ENCODE measurements at regions of chr9 and their contacts with region 1.

Region 1: GRCh38 chr9:121321016-121321503 is 49.0 kb downstream of the STOM start:
- DNase-seq: no peak
- H3K4me3 ChIP-seq: no peak overlapping the region
- H3K27ac ChIP-seq: peak overlapping the region; percentile 9
- H3K4me1 ChIP-seq: peaks cover 22% of the 10 kb centered on the region
- H3K27me3 ChIP-seq: no peaks in the 10 kb centered on the region
- CTCF ChIP-seq: no peak
- POLR2A ChIP-seq: no peak

Region 2: DNA sequence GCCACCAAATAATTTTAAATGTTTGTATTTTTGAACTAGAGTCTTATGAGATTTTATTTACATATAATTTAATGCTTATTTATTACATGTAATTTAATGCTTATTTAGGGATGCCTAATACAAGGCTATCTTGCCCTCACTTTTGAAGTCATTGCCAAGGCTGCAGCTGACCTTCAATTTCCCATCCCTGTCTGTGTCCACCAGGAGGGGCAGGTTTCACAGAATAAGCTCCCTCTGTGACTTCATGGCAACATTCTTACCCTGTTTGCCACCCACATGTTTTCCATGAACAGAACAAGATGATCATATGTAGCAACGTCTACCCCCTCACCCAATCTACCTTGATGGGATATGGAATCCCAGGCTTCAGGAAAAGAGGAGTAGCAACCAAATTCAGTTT is 298.0 kb before region 1 on chr9:
- CTCF ChIA-PET with region 1: no interaction called
- POLR2A ChIA-PET with region 1: no interaction called
- dilution Hi-C with region 1: no loop called
- intact Hi-C with region 1: no loop called
- DNase-seq: no peak
- H3K4me3 ChIP-seq: no peak overlapping the region
- H3K27ac ChIP-seq: no peak overlapping the region
- H3K4me1 ChIP-seq: no peaks in the 10 kb centered on the region
- H3K27me3 ChIP-seq: no peaks in the 10 kb centered on the region
- CTCF ChIP-seq: no peak
- POLR2A ChIP-seq: no peak

Region 3: DNA sequence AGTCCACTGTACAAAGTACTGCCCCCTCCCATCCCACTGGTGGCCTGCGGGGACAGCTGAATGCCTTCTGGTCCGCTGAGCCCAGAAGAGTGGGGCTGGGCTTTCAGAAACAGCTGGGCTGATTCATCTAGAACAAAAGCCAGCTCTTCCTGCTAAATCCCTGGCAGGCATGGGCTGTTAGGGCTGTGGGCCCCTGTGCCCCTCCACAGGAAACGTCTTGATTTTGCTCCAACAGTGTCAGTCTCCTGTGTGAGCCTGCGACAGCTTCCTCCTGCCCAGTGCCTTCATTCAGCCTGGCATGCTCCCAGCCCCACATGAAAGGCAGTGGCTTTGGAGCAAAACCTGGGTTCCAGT is 60.0 kb before region 1 on chr9:
- CTCF ChIA-PET with region 1: interaction called, 10 read pairs
- POLR2A ChIA-PET with region 1: no interaction called
- dilution Hi-C with region 1: no loop called
- intact Hi-C with region 1: no loop called
- DNase-seq: peak; percentile 63
- H3K4me3 ChIP-seq: no peak overlapping the region
- H3K27ac ChIP-seq: peak overlapping the region; percentile 13
- H3K4me1 ChIP-seq: peaks cover 17% of the 10 kb centered on the region
- H3K27me3 ChIP-seq: peaks cover 0 to 5% of the 10 kb centered on the region in 2 experiments
- CTCF ChIP-seq: no peak
- POLR2A ChIP-seq: no peak

Region 4: DNA sequence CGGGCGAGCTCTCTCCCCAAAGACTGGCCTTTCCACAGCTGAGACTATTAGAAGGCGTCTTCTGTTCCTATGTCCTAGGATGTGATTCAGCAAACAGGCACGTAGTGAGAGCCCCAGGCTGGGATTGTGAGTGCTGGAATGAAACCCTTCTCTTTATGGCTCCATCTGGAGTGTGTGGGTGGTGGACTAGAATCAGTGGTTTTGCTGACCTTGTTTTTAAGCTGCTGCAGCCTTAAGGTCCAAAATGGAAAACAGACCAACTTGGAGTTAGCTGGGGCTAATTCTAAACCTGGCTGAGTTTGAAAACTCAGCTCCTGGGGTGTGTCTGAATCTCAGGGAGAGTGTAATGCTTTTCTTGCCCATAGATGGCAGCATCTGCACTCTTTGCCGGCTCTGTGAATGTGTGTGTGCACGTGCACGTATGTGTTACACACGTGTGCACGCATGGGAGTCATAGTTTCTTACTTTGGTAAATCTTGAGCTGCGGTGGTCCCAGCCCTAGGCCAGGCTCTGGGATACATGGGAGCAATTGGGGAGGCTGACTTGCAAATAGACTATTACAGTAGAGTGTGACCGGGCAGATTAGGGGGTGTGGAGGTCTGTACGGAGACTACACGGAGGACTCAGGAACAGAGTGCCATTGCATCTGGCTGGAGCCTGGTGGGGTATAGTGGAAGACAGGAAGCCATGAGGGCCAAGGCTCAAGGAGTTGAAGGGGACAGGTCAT is 42.4 kb before region 1 on chr9:
- CTCF ChIA-PET with region 1: interaction called, 43 read pairs
- POLR2A ChIA-PET with region 1: no interaction called
- dilution Hi-C with region 1: no loop called
- intact Hi-C with region 1: loop called (anchors 1 kb)
- DNase-seq: peak; percentile 84
- H3K4me3 ChIP-seq: peak overlapping the region in 1 of 3 experiments; percentile 8
- H3K27ac ChIP-seq: peak overlapping the region; percentile 73
- H3K4me1 ChIP-seq: peaks cover 44% of the 10 kb centered on the region
- H3K27me3 ChIP-seq: no peaks in the 10 kb centered on the region
- CTCF ChIP-seq: peak; percentile 80 to 84
- POLR2A ChIP-seq: no peak

Region 5: DNA sequence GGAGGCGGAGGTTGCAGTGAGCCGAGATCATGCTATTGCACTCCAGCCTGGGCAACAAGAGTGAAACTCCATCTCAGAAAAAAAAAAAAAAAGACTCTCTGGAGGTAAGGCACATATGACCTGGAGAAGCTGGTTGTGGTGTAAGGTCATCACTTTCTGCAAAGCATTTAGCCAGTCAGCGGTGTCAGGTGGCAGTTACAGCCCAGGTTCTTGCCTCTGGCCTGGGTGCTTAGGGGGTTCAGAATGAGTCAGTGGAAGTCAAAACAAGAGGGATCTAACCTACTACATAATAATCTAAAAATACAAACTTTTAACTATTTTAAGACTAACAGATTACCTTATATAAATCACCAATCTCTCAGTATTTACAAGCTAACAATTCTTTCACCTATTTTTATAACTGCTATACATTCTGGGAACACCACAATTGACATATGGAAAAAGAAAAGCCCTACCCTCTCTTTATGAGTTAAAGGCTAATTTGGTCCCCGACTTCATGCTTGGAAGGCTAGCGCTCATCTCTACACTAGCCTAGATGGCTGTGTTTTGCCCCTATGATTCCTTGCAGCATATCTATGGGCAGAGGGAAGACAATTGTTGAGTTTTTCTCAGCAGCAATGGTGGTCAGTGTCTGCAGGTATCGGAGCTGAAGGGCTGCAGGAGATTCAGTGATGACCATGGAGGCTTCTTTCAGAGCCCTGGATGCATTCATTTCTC is 19.8 kb after region 1 on chr9:
- CTCF ChIA-PET with region 1: interaction called, 12 read pairs
- POLR2A ChIA-PET with region 1: no interaction called
- dilution Hi-C with region 1: no loop called
- intact Hi-C with region 1: no loop called
- DNase-seq: no peak
- H3K4me3 ChIP-seq: no peak overlapping the region
- H3K27ac ChIP-seq: no peak overlapping the region
- H3K4me1 ChIP-seq: no peaks in the 10 kb centered on the region
- H3K27me3 ChIP-seq: no peaks in the 10 kb centered on the region
- CTCF ChIP-seq: no peak
- POLR2A ChIP-seq: no peak

Region 6: DNA sequence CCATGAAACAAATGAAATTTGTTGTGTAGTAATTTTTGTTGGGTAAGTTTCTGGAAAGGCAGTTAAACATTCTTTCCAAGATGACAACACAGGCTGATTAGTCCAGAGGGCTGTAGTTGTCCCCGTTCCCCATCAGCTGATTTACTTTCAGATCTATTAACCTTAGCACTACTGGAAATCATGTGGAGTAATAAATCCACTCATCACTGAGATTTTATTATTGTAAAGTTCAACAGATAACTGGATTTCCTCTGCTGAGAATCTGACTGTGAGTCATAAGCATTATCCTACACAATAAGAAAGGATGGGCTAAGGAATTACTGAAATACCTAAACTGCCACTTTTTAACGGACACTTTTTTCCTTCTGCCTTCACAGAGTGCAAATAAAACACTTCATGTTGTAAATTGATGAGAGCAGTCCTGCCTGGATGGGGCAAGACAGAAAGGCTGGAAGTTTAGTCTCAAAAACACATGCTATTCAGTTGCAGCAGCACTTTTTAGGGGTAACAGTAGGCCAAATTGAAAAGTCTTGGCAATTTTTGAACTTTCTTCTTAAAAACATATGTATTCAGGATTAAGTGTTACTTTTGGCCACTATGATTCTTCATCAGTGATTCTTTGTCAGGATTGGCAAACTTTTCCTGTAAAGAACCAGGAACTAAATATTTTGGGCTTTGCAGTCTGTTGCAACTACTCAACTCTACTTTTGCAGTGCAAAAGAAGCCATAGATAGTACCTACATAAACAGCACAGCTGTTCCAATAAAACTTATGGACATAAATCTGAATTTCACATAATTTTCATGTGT is 42.0 kb after region 1 on chr9:
- CTCF ChIA-PET with region 1: interaction called, 13 read pairs
- POLR2A ChIA-PET with region 1: no interaction called
- dilution Hi-C with region 1: no loop called
- intact Hi-C with region 1: no loop called
- DNase-seq: peak; percentile 75
- H3K4me3 ChIP-seq: no peak overlapping the region
- H3K27ac ChIP-seq: peak overlapping the region; percentile 66
- H3K4me1 ChIP-seq: peaks cover 96% of the 10 kb centered on the region
- H3K27me3 ChIP-seq: no peaks in the 10 kb centered on the region
- CTCF ChIP-seq: no peak
- POLR2A ChIP-seq: no peak

Region 7: GRCh38 chr9:121383715-121384114 is 62.7 kb after region 1 on chr9:
- CTCF ChIA-PET with region 1: interaction called, 116 read pairs
- POLR2A ChIA-PET with region 1: no interaction called
- dilution Hi-C with region 1: no loop called
- intact Hi-C with region 1: no loop called
- DNase-seq: no peak
- H3K4me3 ChIP-seq: no peak overlapping the region
- H3K27ac ChIP-seq: no peak overlapping the region
- H3K4me1 ChIP-seq: no peaks in the 10 kb centered on the region
- H3K27me3 ChIP-seq: no peaks in the 10 kb centered on the region
- CTCF ChIP-seq: no peak
- POLR2A ChIP-seq: no peak

Region 8: GRCh38 chr9:121439711-121440664 is 118.9 kb after region 1 on chr9:
- CTCF ChIA-PET with region 1: interaction called, 10 read pairs
- POLR2A ChIA-PET with region 1: no interaction called
- dilution Hi-C with region 1: no loop called
- intact Hi-C with region 1: loop called (anchors 1 kb)
- DNase-seq: peak; percentile 33
- H3K4me3 ChIP-seq: no peak overlapping the region
- H3K27ac ChIP-seq: no peak overlapping the region
- H3K4me1 ChIP-seq: no peaks in the 10 kb centered on the region
- H3K27me3 ChIP-seq: peaks cover 23 to 37% of the 10 kb centered on the region in 2 experiments
- CTCF ChIP-seq: peak in 1 of 2 donors; percentile 20
- POLR2A ChIP-seq: no peak

Region 9: DNA sequence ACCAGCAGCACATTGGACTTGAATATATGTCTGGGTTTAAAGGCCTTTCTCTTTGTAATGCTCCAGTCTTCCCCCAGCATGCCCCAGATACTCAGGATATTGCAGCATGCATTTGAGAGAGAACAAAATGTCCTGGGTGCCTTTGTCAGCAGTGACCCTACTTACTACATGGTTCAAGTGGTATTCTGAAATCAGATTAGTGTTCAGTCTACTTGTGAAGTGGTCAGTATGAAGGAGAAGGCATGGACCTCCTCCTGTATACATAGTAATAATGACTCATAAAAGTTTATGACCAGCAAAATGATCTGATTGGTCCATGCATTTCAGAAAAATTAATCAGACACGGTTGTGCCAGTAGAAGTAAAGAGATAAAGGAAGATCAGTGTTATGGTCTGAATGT is 1737.8 kb after region 1 on chr9:
- CTCF ChIA-PET with region 1: no interaction called
- POLR2A ChIA-PET with region 1: no interaction called
- dilution Hi-C with region 1: no loop called
- intact Hi-C with region 1: no loop called
- DNase-seq: no peak
- H3K4me3 ChIP-seq: no peak overlapping the region
- H3K27ac ChIP-seq: no peak overlapping the region
- H3K4me1 ChIP-seq: no peaks in the 10 kb centered on the region
- H3K27me3 ChIP-seq: no peaks in the 10 kb centered on the region
- CTCF ChIP-seq: no peak
- POLR2A ChIP-seq: no peak

Measured in endothelial cell of umbilical vein (primary cell).